GM12878 (cell line): ENCODE measurements at regions of chr1 and their contacts with region 1.

Region 1: GRCh38 chr1:200890818-200891773 is 3.6 kb upstream of the INAVA start:
- DNase-seq: no peak
- ATAC-seq: peak; percentile 5
- H3K4me3 ChIP-seq: peak overlapping the region; percentile 45
- H3K27ac ChIP-seq: peak overlapping the region; percentile 69; the same call in 1 of the 2 replicates
- H3K4me1 ChIP-seq: peaks cover 61% of the 10 kb centered on the region
- H3K27me3 ChIP-seq: no peaks in the 10 kb centered on the region
- CTCF ChIP-seq: peak; percentile 42 to 58 (median 47)
- EP300 ChIP-seq: no peak
- POLR2A ChIP-seq: peak; percentile 53; the same call in 1 of the 2 replicates
- RAD21 ChIP-seq: peak; percentile 26; the same call in 1 of the 2 replicates

Region 2: DNA sequence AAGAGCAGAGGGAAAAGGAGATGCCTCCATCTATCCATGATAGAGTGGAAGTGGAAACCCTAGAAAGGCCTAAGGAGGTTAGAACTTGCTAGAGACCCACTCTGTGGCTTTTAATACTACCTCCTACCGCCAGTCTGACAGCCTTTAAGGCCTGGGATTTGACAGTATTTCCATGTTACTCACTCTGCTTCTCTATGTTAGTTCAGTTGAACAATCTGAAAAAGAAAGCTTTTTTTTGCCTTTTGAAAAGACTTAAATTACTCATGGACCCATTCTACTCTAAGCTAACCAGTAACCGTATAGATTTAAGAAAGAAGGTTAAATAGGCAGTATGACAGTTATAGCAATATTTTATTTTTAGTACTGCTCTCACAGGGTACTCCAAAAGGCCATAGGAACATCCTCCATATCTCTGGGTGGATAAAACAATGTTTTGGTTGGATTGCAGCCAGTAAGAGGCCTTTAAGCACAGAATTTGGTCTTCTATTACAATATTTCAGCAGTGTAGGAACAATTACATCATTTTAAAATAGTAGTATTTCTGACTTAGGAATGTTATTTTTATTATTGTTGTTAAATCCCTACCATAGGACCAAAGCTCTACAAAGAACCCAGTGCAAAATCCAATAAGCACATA is 34.3 kb before region 1 on chr1:
- CTCF ChIA-PET with region 1: interaction called, 6 read pairs
- POLR2A ChIA-PET with region 1: interaction called, 12 read pairs
- RAD21 ChIA-PET with region 1: interaction called, 14 read pairs
- SMC1A ChIA-PET with region 1: interaction called, 8 read pairs
- in situ Hi-C with region 1: no loop called
- intact Hi-C with region 1: no loop called
- DNase-seq: no peak
- ATAC-seq: no peak; the same call in 2 of the 3 replicates
- H3K4me3 ChIP-seq: no peak overlapping the region
- H3K27ac ChIP-seq: no peak overlapping the region
- H3K4me1 ChIP-seq: peaks cover 3% of the 10 kb centered on the region
- H3K27me3 ChIP-seq: no peaks in the 10 kb centered on the region
- CTCF ChIP-seq: no peak
- EP300 ChIP-seq: no peak
- POLR2A ChIP-seq: no peak
- RAD21 ChIP-seq: no peak

Region 3: DNA sequence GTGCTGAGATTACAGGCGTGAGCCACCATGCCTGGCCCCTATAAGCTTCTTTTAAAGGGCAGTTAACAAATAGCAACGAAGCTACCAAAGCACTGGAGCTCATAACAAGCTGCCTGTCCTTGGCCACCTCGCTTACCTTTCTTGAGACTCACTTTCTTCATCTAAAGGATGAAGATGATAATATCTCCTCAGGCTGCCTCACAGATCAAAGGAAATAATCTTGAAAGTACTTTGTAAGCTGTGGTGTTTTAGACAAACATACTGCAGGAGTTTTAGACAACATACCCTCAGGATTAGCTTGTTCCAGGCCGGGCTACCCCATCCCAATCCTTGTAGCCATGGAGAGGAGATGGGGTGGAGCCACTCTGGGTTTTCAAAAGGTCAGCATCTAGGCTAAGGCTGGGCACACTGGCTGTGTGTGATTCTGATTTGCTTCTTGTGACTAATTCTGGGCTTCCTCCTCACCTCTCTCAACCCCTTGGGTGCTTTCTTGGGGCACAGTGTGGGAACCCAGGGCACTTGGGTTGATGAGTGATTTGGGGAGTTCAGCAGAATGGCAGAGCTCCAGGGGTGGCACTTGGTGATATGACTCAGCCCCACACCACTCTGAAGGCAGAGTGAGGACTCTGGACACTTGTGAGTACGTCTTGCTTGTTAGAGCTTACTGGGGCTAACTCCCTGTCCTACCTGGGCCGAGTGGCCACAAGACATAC is 13.1 kb before region 1 on chr1:
- CTCF ChIA-PET with region 1: interaction called, 56 read pairs
- POLR2A ChIA-PET with region 1: interaction called, 31 read pairs
- RAD21 ChIA-PET with region 1: interaction called, 98 read pairs
- SMC1A ChIA-PET with region 1: interaction called, 61 read pairs
- in situ Hi-C with region 1: no loop called
- intact Hi-C with region 1: no loop called
- DNase-seq: peak; percentile 89
- ATAC-seq: peak; percentile 84
- H3K4me3 ChIP-seq: no peak overlapping the region
- H3K27ac ChIP-seq: no peak overlapping the region
- H3K4me1 ChIP-seq: peaks cover 17% of the 10 kb centered on the region
- H3K27me3 ChIP-seq: no peaks in the 10 kb centered on the region
- CTCF ChIP-seq: no peak
- EP300 ChIP-seq: peak in 1 of 2 experiments; percentile 58; a peak in 1 of 4 replicates
- POLR2A ChIP-seq: no peak
- RAD21 ChIP-seq: no peak

Region 4: DNA sequence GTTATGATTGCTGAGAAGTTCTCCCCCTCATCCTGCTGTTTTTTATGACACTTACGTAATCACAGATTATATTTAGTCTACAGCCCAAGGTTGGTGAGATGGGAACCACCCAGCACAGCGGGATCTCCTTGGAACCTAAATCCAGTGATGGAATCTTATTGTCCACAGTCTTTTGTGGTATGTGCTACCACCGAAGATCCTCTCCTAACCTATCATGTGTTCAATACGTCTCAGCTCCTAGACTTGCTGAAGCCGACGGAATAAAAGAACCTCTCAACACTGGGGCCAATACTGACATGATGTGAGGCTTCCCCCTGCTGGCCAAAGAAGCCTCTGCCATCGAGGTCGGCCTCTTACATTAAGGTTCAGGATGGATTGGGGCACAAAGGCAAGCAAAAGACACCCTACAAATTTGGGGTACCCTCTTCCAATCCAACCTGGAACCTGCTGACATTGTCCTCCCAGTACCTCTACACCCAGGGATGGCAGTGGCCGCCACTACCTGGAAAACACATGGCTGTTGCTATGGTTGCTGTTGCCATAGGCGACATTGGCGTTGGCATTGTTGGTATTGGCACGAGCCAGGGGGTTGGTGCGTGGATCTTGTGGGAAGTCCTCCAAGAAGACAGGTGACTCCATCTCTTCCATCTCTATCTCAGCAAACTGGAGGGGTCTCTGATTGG is 151.8 kb after region 1 on chr1:
- CTCF ChIA-PET with region 1: interaction called, 16 read pairs
- POLR2A ChIA-PET with region 1: no interaction called
- RAD21 ChIA-PET with region 1: interaction called, 4 read pairs
- SMC1A ChIA-PET with region 1: interaction called, 8 read pairs
- in situ Hi-C with region 1: no loop called
- intact Hi-C with region 1: loop called (anchors 2 kb)
- DNase-seq: no peak
- ATAC-seq: peak; percentile 97
- H3K4me3 ChIP-seq: no peak overlapping the region
- H3K27ac ChIP-seq: no peak overlapping the region
- H3K4me1 ChIP-seq: no peaks in the 10 kb centered on the region
- H3K27me3 ChIP-seq: no peaks in the 10 kb centered on the region; a peak in 1 of 4 replicates
- CTCF ChIP-seq: peak; percentile 87 to 94 (median 93); a peak in 5 of 6 replicates
- EP300 ChIP-seq: no peak
- POLR2A ChIP-seq: no peak
- RAD21 ChIP-seq: peak; percentile 99

Region 5: DNA sequence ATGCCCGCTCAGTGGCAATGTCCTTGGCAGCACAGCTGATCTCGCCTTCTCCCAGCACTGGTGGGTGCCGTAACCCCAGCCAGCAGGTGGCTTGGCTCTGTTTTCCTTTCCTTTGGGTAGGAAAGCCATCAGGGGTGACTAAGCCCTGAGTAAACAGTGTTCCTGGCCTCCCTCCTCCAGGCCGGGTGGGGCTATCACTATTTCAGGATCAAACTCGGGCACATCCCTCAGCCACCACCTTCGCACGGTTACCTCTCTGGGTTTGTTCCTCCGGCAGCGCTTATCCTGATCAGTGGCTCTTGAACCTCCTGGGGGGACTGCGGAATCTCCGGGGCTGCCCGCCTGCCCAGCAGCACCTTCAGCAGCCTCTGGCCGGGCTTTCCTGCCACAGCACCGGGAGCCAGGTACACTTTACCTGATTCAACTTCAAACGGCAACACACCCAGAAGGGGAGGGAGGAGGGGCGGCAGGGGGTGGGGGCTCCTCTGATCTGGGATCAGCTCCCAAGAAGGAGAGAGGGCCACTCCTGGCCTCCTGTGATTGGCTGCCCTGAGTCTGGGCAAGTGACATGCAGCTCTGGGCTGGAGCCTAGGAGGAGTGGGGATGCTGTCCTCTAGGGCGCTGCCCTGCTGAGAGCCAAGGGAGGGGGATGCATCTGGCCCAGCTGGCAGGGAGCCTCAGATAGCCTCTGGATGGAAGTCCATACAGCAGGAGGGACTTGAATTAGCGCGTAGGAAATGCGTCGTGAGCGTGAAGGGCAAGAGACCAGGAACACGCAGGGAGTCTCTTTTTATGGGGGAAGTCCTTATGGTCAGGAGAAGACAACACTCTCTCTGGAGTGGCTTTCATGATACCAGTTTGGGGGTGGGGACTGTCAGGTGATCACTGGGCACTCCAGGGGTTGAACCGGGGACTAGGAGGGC is 236.0 kb after region 1 on chr1 and contains the start of gene ASCL5:
- CTCF ChIA-PET with region 1: no interaction called
- POLR2A ChIA-PET with region 1: no interaction called
- RAD21 ChIA-PET with region 1: no interaction called
- SMC1A ChIA-PET with region 1: no interaction called
- in situ Hi-C with region 1: no loop called
- intact Hi-C with region 1: no loop called
- DNase-seq: no peak
- ATAC-seq: no peak
- H3K4me3 ChIP-seq: no peak within 1 kb of the TSS
- H3K27ac ChIP-seq: no peak within 1 kb of the TSS
- H3K4me1 ChIP-seq: no peaks in the 10 kb centered on the region
- H3K27me3 ChIP-seq: peaks cover 0 to 1% of the 10 kb centered on the region in 2 experiments; a peak in 2 of 4 replicates
- CTCF ChIP-seq: no peak
- EP300 ChIP-seq: no peak
- POLR2A ChIP-seq: no peak
- RAD21 ChIP-seq: no peak
- polyA plus RNA-seq, gene ASCL5: not detected